Right lobe of liver (tissue), 6 donors: ENCODE measurements at regions of chr15 and their contacts with region 1.

Region 1: GRCh38 chr15:89874926-89875564 is 18.7 kb downstream of the AP3S2 start:
- DNase-seq: peak; percentile 85 to 87 (median 86)
- ATAC-seq: peak; percentile 95 to 99 (median 98)
- H3K4me3 ChIP-seq: no peak overlapping the region
- H3K27ac ChIP-seq: no peak overlapping the region
- H3K4me1 ChIP-seq: peaks cover 0 to 13% (median 0%) of the 10 kb centered on the region in 4 donors
- H3K27me3 ChIP-seq: no peaks in the 10 kb centered on the region
- CTCF ChIP-seq: peak; percentile 90 to 97 (median 96)
- POLR2A ChIP-seq: no peak

Region 2: GRCh38 chr15:89754361-89755140 is 120.5 kb before region 1 on chr15:
- intact Hi-C with region 1: loop called (anchors 5 to 10 kb)
- DNase-seq: no peak
- ATAC-seq: no peak
- H3K4me3 ChIP-seq: no peak overlapping the region
- H3K27ac ChIP-seq: no peak overlapping the region
- H3K4me1 ChIP-seq: peaks cover 0 to 14% (median 0%) of the 10 kb centered on the region in 4 donors
- H3K27me3 ChIP-seq: no peaks in the 10 kb centered on the region
- CTCF ChIP-seq: no peak
- POLR2A ChIP-seq: no peak

Region 3: GRCh38 chr15:89760303-89761008 is 114.6 kb before region 1 on chr15:
- intact Hi-C with region 1: loop called (anchors 5 to 10 kb)
- DNase-seq: peak; percentile 81 to 86 (median 83)
- ATAC-seq: peak; percentile 86 to 93 (median 90)
- H3K4me3 ChIP-seq: no peak overlapping the region
- H3K27ac ChIP-seq: peak overlapping the region in 2 of 3 donors; percentile 40 to 67
- H3K4me1 ChIP-seq: peaks cover 0 to 27% (median 9%) of the 10 kb centered on the region in 4 donors
- H3K27me3 ChIP-seq: no peaks in the 10 kb centered on the region
- CTCF ChIP-seq: peak; percentile 97 to 99 (median 98)
- POLR2A ChIP-seq: no peak

Region 4: GRCh38 chr15:89836255-89837133 is 38.6 kb before region 1 on chr15:
- intact Hi-C with region 1: no loop called
- DNase-seq: no peak
- ATAC-seq: peak in 2 of 4 donors; percentile 14 to 40
- H3K4me3 ChIP-seq: no peak overlapping the region
- H3K27ac ChIP-seq: no peak overlapping the region
- H3K4me1 ChIP-seq: no peaks in the 10 kb centered on the region
- H3K27me3 ChIP-seq: no peaks in the 10 kb centered on the region
- CTCF ChIP-seq: no peak
- POLR2A ChIP-seq: no peak

Region 5: DNA sequence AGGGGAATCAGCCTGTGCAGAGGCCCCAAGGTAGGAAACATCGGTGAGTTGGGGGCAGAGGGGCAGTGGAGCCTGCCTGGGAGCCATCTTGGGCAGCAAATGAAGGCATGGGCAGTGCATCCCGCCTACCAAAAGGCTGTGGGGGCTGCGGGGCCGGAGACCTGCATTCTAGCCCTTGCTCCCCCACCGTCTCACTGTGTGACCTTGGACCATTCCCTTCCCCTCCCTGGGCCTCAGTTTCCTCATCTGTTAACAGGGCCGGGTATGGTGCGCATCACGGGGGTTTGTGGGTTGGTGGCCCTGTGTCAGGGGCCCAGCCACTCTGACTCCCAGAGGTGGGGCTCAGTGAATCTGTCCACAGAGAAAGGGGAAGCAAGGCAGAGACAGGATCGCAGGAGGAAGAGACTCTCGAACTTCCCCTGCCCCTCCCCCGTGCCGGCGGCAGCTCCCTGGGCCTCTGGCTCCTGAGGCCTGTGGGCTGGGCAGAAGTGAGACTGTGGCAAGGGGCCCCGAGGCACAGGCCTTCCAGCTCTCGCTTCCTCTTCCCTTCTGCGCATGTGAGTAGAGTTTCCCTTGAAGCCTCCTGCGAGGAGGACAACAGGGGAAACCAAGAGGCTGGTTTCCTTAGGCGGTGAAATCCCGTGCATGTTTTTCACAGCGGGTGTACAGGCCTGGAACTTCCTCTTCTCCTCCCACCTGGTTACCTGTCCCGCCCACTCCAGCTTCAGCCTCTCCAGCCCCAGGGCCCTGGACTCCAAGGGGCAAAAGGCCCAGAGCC is 184.4 kb after region 1 on chr15:
- intact Hi-C with region 1: no loop called
- DNase-seq: peak; percentile 80 to 89 (median 80)
- ATAC-seq: peak; percentile 56 to 69 (median 66)
- H3K4me3 ChIP-seq: no peak overlapping the region
- H3K27ac ChIP-seq: peak overlapping the region; percentile 15 to 69 (median 61)
- H3K4me1 ChIP-seq: peaks cover 0 to 13% (median 3%) of the 10 kb centered on the region in 4 donors
- H3K27me3 ChIP-seq: no peaks in the 10 kb centered on the region
- CTCF ChIP-seq: no peak
- POLR2A ChIP-seq: no peak

Region 6: GRCh38 chr15:90086868-90087268 is 211.8 kb after region 1 on chr15:
- intact Hi-C with region 1: no loop called
- DNase-seq: peak in 2 of 3 donors; percentile 53 to 60
- ATAC-seq: peak; percentile 44 to 66 (median 50)
- H3K4me3 ChIP-seq: no peak overlapping the region
- H3K27ac ChIP-seq: no peak overlapping the region
- H3K4me1 ChIP-seq: peaks cover 0 to 3% (median 0%) of the 10 kb centered on the region in 4 donors
- H3K27me3 ChIP-seq: no peaks in the 10 kb centered on the region
- CTCF ChIP-seq: peak; percentile 56 to 74 (median 65)
- POLR2A ChIP-seq: no peak

Region 7: GRCh38 chr15:90233376-90234095 is 358.5 kb after region 1 on chr15 and contains the start of gene CIB1:
- intact Hi-C with region 1: no loop called
- DNase-seq: peak; percentile 99
- ATAC-seq: peak; percentile 80 to 94 (median 86)
- H3K4me3 ChIP-seq: peak within 1 kb of the TSS; percentile 89 to 97 (median 92)
- H3K27ac ChIP-seq: peak within 1 kb of the TSS; percentile 89 to 97 (median 90)
- H3K4me1 ChIP-seq: peaks cover 0 to 47% (median 18%) of the 10 kb centered on the region in 4 donors
- H3K27me3 ChIP-seq: no peaks in the 10 kb centered on the region
- CTCF ChIP-seq: peak in 2 of 4 donors; percentile 50 to 62
- POLR2A ChIP-seq: peak; percentile 71
- total RNA-seq, gene CIB1: 43.4 to 83.0 (median 51.0) TPM